Endothelial cell of umbilical vein (primary cell): ENCODE measurements at regions of chr3 and their contacts with region 1.

Region 1: GRCh38 chr3:160565442-160566403 is at the start of gene KPNA4:
- DNase-seq: peak; percentile 98
- H3K4me3 ChIP-seq: peak within 1 kb of the TSS; percentile 90 to 94 (median 93)
- H3K27ac ChIP-seq: peak within 1 kb of the TSS; percentile 99
- H3K4me1 ChIP-seq: peaks cover 55% of the 10 kb centered on the region
- H3K27me3 ChIP-seq: no peaks in the 10 kb centered on the region
- CTCF ChIP-seq: no peak
- POLR2A ChIP-seq: peak; percentile 70
- total RNA-seq, gene KPNA4: 70.1 and 80.7 TPM in 2 replicates

Region 2: GRCh38 chr3:160399125-160400029 is 166.3 kb before region 1 on chr3 and contains the starts of genes IFT80 and SMC4:
- CTCF ChIA-PET with region 1: no interaction called
- POLR2A ChIA-PET with region 1: no interaction called
- dilution Hi-C with region 1: no loop called
- intact Hi-C with region 1: loop called (anchors 1 kb)
- DNase-seq: peak; percentile 97
- H3K4me3 ChIP-seq: peak within 1 kb of the TSS; percentile 77 to 79 (median 78)
- H3K27ac ChIP-seq: peak within 1 kb of the TSS; percentile 76
- H3K4me1 ChIP-seq: peaks cover 16% of the 10 kb centered on the region
- H3K27me3 ChIP-seq: no peaks in the 10 kb centered on the region
- CTCF ChIP-seq: no peak
- POLR2A ChIP-seq: peak; percentile 52
- total RNA-seq, gene IFT80: 21.4 and 22.5 TPM in 2 replicates
- total RNA-seq, gene SMC4: 126 and 153 TPM in 2 replicates

Region 3: GRCh38 chr3:160449636-160450598 is 115.8 kb before region 1 on chr3 and contains the start of gene TRIM59:
- CTCF ChIA-PET with region 1: no interaction called
- POLR2A ChIA-PET with region 1: no interaction called
- dilution Hi-C with region 1: no loop called
- intact Hi-C with region 1: loop called (anchors 1 kb)
- DNase-seq: peak; percentile 98
- H3K4me3 ChIP-seq: peak within 1 kb of the TSS; percentile 52 to 85 (median 74)
- H3K27ac ChIP-seq: peak within 1 kb of the TSS; percentile 55
- H3K4me1 ChIP-seq: peaks cover 21% of the 10 kb centered on the region
- H3K27me3 ChIP-seq: no peaks in the 10 kb centered on the region
- CTCF ChIP-seq: no peak
- POLR2A ChIP-seq: peak; percentile 88
- total RNA-seq, gene TRIM59: 32.5 and 33.0 TPM in 2 replicates

Region 4: DNA sequence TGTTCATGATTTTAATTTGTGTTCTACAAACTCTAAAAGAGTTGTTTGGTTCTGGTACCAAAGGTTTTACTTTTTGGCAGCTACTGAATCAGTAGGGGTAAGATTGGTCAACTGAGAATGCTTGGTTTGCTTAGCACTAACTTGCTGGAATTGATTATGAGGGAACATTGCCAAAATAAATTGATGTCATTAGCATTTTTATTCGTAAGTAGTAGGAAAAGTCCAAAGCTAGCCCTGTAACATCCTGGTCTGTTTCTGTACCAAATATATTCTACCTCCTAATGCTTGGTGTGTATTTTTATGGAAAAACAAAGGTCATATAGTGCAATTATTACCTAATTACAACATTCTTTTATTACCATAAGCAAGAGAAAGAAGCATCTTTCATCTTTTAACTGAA is 35.6 kb after region 1 on chr3:
- CTCF ChIA-PET with region 1: no interaction called
- POLR2A ChIA-PET with region 1: no interaction called
- dilution Hi-C with region 1: no loop called
- intact Hi-C with region 1: no loop called
- DNase-seq: no peak
- H3K4me3 ChIP-seq: no peak overlapping the region
- H3K27ac ChIP-seq: no peak overlapping the region
- H3K4me1 ChIP-seq: no peaks in the 10 kb centered on the region
- H3K27me3 ChIP-seq: no peaks in the 10 kb centered on the region
- CTCF ChIP-seq: no peak
- POLR2A ChIP-seq: no peak

Region 5: DNA sequence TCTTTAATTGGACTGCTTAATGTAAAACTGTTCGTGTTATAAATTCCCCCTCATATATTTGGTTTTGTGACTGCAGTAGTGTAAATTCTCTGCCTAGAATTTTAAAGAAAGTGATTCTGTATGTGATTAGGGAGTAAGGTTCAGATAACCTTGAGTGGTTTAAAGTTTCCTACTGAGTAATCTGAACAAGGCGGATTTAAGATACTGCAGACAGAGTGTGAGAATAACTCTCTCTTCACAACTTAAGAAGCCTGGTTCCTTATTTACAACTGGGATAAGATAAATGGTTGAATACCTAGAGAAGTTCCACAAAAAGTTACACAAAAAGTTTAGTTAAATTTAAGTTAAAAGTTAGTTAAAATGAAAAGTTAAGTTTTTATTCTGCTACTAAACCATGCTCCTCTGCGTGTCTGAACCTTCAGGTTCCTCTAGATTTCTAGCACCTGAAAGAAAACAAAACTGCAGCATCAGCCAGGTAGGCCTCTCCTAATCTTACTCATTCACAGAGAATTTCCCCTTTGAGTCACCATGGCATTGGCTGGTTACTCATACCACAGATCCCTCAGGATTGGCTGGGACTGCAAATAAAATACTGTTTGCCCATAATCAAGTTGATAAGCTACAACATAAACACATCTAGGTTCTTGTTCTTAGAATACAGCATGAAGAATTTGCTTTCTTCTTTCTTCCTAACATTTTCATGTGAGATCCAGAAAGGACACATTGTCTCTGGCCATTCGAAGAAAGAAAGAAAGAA is 111.0 kb after region 1 on chr3 and contains the start of gene ARL14:
- CTCF ChIA-PET with region 1: no interaction called
- POLR2A ChIA-PET with region 1: no interaction called
- dilution Hi-C with region 1: no loop called
- intact Hi-C with region 1: loop called (anchors 2 kb)
- DNase-seq: peak; percentile 60
- H3K4me3 ChIP-seq: no peak within 1 kb of the TSS
- H3K27ac ChIP-seq: peak within 1 kb of the TSS; percentile 50
- H3K4me1 ChIP-seq: peaks cover 19% of the 10 kb centered on the region
- H3K27me3 ChIP-seq: no peaks in the 10 kb centered on the region
- CTCF ChIP-seq: no peak
- POLR2A ChIP-seq: no peak
- total RNA-seq, gene ARL14: not detected in 2 replicates

Region 6: DNA sequence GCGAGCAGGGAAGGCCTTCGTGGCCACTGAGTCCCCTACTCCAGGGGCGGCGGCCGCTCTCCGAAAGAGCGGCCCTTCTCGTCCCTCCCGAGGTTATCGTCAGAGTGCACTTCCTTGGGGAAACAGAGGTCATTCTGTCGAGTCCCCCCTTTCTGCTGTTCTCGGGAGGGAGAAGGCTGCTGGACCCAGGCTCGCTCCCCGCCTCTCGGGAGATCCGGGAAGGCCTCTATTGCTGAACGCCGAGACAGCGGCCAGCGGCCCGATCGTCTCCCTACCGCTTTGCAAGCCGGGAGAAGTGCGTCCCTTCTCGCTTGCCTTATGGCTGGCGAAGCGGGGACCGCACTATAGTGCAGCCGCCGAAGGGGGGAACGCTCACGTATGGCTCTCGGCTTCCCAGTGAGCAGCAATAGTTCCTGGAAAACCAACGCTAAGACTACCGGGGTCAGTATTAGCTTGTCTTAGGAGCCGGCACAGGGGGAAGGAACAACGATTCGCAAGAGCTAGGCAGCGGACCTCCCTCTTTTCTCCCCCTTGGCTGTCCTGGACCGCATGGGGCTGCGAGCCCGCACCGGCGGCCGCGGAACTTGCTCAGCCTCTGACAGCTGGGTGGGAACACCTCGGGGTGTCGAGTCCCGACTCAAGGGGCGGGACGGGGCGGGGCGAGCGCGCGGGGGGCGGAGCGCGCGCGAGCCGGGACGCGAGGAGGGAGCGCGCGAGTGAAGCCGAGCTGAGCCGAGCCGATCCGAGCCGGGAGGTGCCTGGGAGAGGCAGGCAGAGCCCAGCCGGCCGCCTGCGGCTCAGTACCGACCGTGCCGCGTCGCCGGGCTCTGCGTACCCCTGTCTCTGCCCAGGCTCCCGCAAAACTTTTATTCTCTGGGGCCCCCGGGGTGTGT is 189.4 kb after region 1 on chr3:
- CTCF ChIA-PET with region 1: no interaction called
- POLR2A ChIA-PET with region 1: interaction called, 5 read pairs
- dilution Hi-C with region 1: no loop called
- intact Hi-C with region 1: loop called (anchors 1 kb)
- DNase-seq: peak; percentile 95
- H3K4me3 ChIP-seq: peak overlapping the region; percentile 49 to 80 (median 71)
- H3K27ac ChIP-seq: peak overlapping the region; percentile 84
- H3K4me1 ChIP-seq: peaks cover 8% of the 10 kb centered on the region
- H3K27me3 ChIP-seq: peaks cover 5 to 13% of the 10 kb centered on the region in 2 experiments
- CTCF ChIP-seq: no peak
- POLR2A ChIP-seq: no peak

Region 7: GRCh38 chr3:161266731-161267166 is 701.0 kb after region 1 on chr3:
- CTCF ChIA-PET with region 1: no interaction called
- POLR2A ChIA-PET with region 1: no interaction called
- dilution Hi-C with region 1: no loop called
- intact Hi-C with region 1: loop called (anchors 1 kb)
- DNase-seq: peak; percentile 87
- H3K4me3 ChIP-seq: no peak overlapping the region
- H3K27ac ChIP-seq: peak overlapping the region; percentile 86
- H3K4me1 ChIP-seq: peaks cover 23% of the 10 kb centered on the region
- H3K27me3 ChIP-seq: no peaks in the 10 kb centered on the region
- CTCF ChIP-seq: no peak
- POLR2A ChIP-seq: no peak

Region 8: GRCh38 chr3:161415497-161416251 is 850.0 kb after region 1 on chr3:
- CTCF ChIA-PET with region 1: no interaction called
- POLR2A ChIA-PET with region 1: no interaction called
- dilution Hi-C with region 1: no loop called
- intact Hi-C with region 1: loop called (anchors 5 kb)
- DNase-seq: peak; percentile 93
- H3K4me3 ChIP-seq: peak overlapping the region in 1 of 3 experiments; percentile 10
- H3K27ac ChIP-seq: peak overlapping the region; percentile 97
- H3K4me1 ChIP-seq: peaks cover 19% of the 10 kb centered on the region
- H3K27me3 ChIP-seq: no peaks in the 10 kb centered on the region
- CTCF ChIP-seq: no peak
- POLR2A ChIP-seq: no peak